ENCODE measurements at regions of chr1 and their contacts with region 1.

Region 1: GRCh38 chr1:58783993-58784757 is at the start of gene JUN:
- DNase-seq: peak; percentile 100
- H3K4me3 ChIP-seq: peak within 1 kb of the TSS; percentile 77 to 87 (median 80)
- H3K27ac ChIP-seq: peak within 1 kb of the TSS; percentile 97 to 100 (median 98)
- H3K4me1 ChIP-seq: peaks cover 0 to 27% (median 21%) of the 10 kb centered on the region in 4 donors
- H3K27me3 ChIP-seq: no peaks in the 10 kb centered on the region
- CTCF ChIP-seq: peak in 1 of 4 experiments; percentile 10
- EP300 ChIP-seq: peak in 2 of 4 donors; percentile 15 to 94
- POLR2A ChIP-seq: peak; percentile 75 to 93
- total RNA-seq, gene JUN: 52.4 to 233 (median 202) TPM

Region 2: GRCh38 chr1:58304346-58304975 is 479.7 kb before region 1 on chr1:
- intact Hi-C with region 1: no loop called
- DNase-seq: no peak
- H3K4me3 ChIP-seq: no peak overlapping the region
- H3K27ac ChIP-seq: no peak overlapping the region
- H3K4me1 ChIP-seq: no peaks in the 10 kb centered on the region
- H3K27me3 ChIP-seq: no peaks in the 10 kb centered on the region
- CTCF ChIP-seq: no peak
- EP300 ChIP-seq: no peak
- POLR2A ChIP-seq: no peak

Region 3: DNA sequence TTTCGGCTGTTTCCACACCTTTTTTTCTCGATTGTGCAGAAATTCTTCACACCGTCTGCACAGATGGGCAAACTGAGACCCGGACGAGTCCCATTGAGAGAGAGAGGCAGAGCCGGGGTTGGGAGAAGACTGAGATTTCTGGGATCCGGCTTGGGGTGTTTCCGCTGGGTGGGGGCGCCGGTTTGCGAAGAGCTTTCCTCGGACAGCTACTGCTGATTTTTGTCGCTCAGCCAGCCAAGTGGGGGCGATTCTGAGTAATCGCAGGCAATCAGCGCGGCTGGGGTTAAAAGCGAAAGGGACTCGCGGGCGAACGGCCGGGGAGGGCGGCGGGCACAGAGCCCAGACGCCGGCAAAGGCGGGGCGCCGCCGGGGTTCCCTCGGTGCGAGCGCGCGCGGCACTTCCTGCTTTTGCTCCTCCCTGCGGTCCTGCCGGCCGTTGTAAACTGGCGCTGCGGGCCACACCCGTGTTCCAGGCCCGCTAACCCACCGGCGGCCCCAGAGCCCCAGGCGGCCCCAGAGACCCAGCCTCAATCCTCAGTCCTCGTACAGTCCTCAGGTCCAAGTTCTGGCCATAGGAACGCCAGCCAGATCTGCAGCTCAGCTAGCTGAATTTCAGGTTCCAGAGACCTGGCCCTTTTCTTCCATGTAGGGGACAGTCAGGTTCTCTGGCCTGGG is 32.0 kb after region 1 on chr1:
- intact Hi-C with region 1: loop called (anchors 1 kb)
- DNase-seq: peak; percentile 96
- H3K4me3 ChIP-seq: peak overlapping the region; percentile 42 to 66 (median 56)
- H3K27ac ChIP-seq: peak overlapping the region; percentile 84 to 94 (median 90)
- H3K4me1 ChIP-seq: peaks cover 0 to 24% (median 15%) of the 10 kb centered on the region in 4 donors
- H3K27me3 ChIP-seq: no peaks in the 10 kb centered on the region
- CTCF ChIP-seq: no peak
- EP300 ChIP-seq: no peak
- POLR2A ChIP-seq: peak; percentile 56 to 64

Region 4: DNA sequence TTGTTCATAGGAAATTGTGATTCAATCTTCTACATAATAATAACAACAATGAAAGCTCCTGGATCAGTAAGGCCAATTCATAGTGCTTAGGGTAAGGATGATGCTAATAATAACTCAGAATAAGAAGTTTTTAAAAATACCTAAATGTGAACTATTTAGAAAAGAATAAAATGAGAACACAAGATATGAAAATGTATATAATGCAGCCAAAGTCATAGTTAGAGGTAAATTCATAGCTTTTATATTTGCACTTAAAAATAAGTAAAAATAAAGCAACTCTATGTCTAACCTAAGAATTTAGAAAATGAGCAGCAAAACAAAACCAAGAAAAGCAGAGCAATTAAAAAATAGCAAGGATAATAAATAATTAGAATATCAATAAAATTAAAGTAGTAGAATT is 43.1 kb after region 1 on chr1:
- intact Hi-C with region 1: no loop called
- DNase-seq: no peak
- H3K4me3 ChIP-seq: no peak overlapping the region
- H3K27ac ChIP-seq: no peak overlapping the region
- H3K4me1 ChIP-seq: no peaks in the 10 kb centered on the region
- H3K27me3 ChIP-seq: no peaks in the 10 kb centered on the region
- CTCF ChIP-seq: no peak
- EP300 ChIP-seq: no peak
- POLR2A ChIP-seq: no peak

Region 5: DNA sequence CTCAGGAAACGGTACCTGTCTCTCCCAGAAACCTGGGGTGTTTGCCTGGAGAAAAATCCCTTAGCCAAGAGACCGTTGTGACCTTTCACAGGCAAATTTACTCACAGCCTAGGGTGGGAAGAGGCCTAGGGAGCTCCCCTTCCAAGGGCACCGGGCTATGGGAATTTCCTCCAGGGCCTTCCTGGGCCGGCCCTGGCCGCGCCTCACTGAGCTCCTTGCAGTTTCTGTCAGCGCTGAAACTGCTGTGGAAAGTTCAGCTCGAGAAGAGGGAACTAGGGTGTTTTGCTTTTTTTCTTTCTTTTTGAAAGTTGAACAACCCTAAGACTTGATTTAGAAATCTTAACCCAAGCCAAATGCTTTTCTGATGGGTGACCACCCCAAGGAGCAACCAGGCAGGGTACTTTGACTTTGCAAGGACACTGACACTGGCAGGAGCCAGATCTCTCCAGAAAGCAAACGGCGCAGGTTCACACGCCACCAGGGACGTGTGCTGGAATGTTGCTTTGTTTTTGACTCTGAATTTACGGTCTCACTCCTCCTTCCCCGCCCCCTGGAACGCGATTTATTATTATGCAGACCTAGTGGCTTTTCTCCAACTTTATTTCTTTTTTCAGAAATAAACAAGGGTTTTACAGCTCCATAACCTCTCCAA is 229.2 kb after region 1 on chr1:
- intact Hi-C with region 1: loop called (anchors 2 kb)
- DNase-seq: peak; percentile 85
- H3K4me3 ChIP-seq: peak overlapping the region in 3 of 4 donors; percentile 2 to 26 (median 15)
- H3K27ac ChIP-seq: peak overlapping the region; percentile 72 to 95 (median 89)
- H3K4me1 ChIP-seq: peaks cover 0 to 49% (median 35%) of the 10 kb centered on the region in 4 donors
- H3K27me3 ChIP-seq: no peaks in the 10 kb centered on the region
- CTCF ChIP-seq: no peak
- EP300 ChIP-seq: peak in 3 of 4 donors; percentile 12 to 67 (median 30)
- POLR2A ChIP-seq: no peak

Region 6: GRCh38 chr1:59076612-59077011 is 292.4 kb after region 1 on chr1:
- intact Hi-C with region 1: loop called (anchors 5 kb)
- DNase-seq: no peak
- H3K4me3 ChIP-seq: no peak overlapping the region
- H3K27ac ChIP-seq: no peak overlapping the region
- H3K4me1 ChIP-seq: peaks cover 0 to 5% (median 0%) of the 10 kb centered on the region in 4 donors
- H3K27me3 ChIP-seq: no peaks in the 10 kb centered on the region
- CTCF ChIP-seq: peak; percentile 0 to 40 (median 33)
- EP300 ChIP-seq: no peak
- POLR2A ChIP-seq: no peak

Region 7: DNA sequence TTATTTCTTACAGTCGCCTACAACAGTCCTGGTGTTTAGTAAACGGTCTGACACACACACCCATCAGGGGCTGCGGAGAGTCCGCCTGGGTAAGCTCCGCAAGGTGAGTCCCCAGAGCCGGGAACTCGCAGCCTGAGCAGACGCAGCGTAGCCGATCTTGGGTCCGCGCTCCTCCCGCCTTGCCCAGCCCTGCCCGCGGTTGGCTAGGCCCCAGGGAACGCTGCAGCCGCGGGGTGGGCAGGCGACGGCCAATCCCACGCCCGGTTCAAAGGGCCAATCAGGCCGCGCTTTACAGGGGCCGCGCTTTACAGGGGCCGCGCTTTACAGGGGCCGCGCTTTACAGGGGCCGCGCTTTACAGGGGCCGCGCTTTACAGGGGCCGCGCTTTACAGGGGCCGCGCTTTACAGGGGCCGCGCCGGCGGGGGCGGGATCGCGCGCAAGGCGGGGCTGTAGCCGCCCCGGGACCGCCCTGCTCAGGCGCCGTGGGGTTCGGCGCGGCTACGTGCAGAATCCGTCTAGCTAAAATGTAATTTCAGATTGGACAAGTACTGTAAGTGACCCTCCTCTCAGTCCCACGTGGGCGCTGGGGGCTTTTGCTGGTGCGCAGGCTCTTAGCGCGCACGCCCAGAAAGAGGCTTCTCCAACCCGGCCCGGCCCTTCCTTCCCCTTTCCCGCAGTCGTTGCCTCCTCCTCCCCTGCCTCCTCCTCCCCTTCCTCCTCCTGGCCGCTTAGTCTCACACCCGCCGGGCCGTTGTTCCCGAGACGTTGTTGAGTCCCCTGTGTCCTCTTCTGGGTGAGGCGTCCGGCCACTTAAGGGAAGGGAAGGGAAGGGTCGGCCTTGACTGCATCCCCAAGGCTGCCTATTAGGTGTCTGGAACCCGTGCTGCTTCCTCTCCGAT is 512.4 kb after region 1 on chr1 and contains the start of gene FGGY:
- intact Hi-C with region 1: loop called (anchors 1 kb)
- DNase-seq: peak; percentile 99
- H3K4me3 ChIP-seq: peak within 1 kb of the TSS; percentile 45 to 61 (median 50)
- H3K27ac ChIP-seq: peak within 1 kb of the TSS; percentile 90 to 98 (median 94)
- H3K4me1 ChIP-seq: peaks cover 0 to 20% (median 15%) of the 10 kb centered on the region in 4 donors
- H3K27me3 ChIP-seq: no peaks in the 10 kb centered on the region
- CTCF ChIP-seq: no peak
- EP300 ChIP-seq: peak in 2 of 4 donors; percentile 40 to 63
- POLR2A ChIP-seq: peak; percentile 91
- total RNA-seq, gene FGGY: 20.5 to 54.1 (median 33.9) TPM

Region 8: GRCh38 chr1:59446257-59446901 is 662.2 kb after region 1 on chr1:
- intact Hi-C with region 1: loop called (anchors 2 kb)
- DNase-seq: peak; percentile 89
- H3K4me3 ChIP-seq: no peak overlapping the region
- H3K27ac ChIP-seq: peak overlapping the region; percentile 68 to 85 (median 80)
- H3K4me1 ChIP-seq: peaks cover 0 to 62% (median 48%) of the 10 kb centered on the region in 4 donors
- H3K27me3 ChIP-seq: no peaks in the 10 kb centered on the region
- CTCF ChIP-seq: no peak
- EP300 ChIP-seq: peak; percentile 41 to 93 (median 81)
- POLR2A ChIP-seq: no peak

Region 9: GRCh38 chr1:59699227-59699847 is 915.2 kb after region 1 on chr1:
- intact Hi-C with region 1: loop called (anchors 2 kb)
- DNase-seq: no peak
- H3K4me3 ChIP-seq: no peak overlapping the region
- H3K27ac ChIP-seq: peak overlapping the region in 3 of 4 donors; percentile 24 to 56 (median 51)
- H3K4me1 ChIP-seq: peaks cover 0 to 64% (median 44%) of the 10 kb centered on the region in 4 donors
- H3K27me3 ChIP-seq: no peaks in the 10 kb centered on the region
- CTCF ChIP-seq: peak; percentile 84 to 96 (median 96)
- EP300 ChIP-seq: no peak
- POLR2A ChIP-seq: no peak

Measured in sigmoid colon (tissue), 7 donors.